ENCODE measurements at regions of chr11 and their contacts with region 1.

Region 1: DNA sequence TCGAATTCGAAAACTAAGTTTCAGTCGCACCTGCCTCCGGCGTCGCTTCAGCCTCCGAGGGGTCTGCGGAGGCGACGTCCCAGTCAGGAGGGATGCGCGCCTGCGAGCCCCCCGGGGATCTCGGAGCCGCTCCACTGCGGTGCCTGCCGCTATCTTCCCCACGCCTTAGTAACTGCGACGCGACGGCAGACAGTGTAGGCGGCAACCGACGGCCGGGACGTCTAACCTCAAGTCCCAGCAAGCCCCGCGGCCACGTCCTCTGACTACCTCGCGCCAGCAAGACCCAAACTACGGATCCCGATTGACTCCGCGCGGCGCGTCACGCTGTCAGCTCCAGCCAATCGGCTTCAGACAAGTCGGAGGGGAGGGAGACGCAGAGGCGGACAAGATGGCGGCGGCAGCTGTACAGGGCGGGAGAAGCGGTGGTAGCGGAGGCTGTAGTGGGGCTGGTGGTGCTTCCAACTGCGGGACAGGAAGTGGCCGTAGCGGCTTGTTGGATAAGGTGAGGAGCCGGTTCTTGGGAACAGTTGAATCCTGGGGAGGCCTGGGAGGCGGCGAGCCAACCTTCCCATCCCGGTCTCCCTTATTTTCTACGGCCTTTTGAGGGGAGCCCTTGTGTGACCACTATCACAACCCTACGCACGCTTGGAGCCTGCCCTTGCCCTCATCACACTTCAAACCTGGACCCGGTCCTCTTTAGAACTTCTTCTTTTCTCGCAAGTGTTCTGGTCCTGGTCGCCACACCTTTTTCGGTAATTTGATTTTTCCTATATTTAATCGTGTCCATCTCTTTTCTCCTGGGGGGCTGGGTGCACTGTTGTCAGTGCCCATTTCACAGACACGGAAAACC is at the starts of genes SPCS2 and XRRA1:
- DNase-seq: peak; percentile 87 to 98 (median 97)
- ATAC-seq: peak; percentile 99
- H3K4me3 ChIP-seq: peak within 1 kb of the TSS; percentile 99
- H3K4me3 Mint-ChIP-seq: peak within 1 kb of the TSS; percentile 95 to 99 (median 96)
- H3K27ac ChIP-seq: peak within 1 kb of the TSS; percentile 78
- H3K27ac Mint-ChIP-seq: peak within 1 kb of the TSS; percentile 85 to 99 (median 96)
- H3K4me1 ChIP-seq: peaks cover 16 to 21% of the 10 kb centered on the region in 2 donors
- H3K4me1 Mint-ChIP-seq: peaks cover 30 to 86% (median 55%) of the 10 kb centered on the region in 7 donors
- H3K27me3 ChIP-seq: no peaks in the 10 kb centered on the region
- H3K27me3 Mint-ChIP-seq: no peaks in the 10 kb centered on the region
- total RNA-seq, gene SPCS2: 53.9 to 211 (median 87.5) TPM
- total RNA-seq, gene XRRA1: 11.3 to 20.8 (median 20.3) TPM

Region 2: DNA sequence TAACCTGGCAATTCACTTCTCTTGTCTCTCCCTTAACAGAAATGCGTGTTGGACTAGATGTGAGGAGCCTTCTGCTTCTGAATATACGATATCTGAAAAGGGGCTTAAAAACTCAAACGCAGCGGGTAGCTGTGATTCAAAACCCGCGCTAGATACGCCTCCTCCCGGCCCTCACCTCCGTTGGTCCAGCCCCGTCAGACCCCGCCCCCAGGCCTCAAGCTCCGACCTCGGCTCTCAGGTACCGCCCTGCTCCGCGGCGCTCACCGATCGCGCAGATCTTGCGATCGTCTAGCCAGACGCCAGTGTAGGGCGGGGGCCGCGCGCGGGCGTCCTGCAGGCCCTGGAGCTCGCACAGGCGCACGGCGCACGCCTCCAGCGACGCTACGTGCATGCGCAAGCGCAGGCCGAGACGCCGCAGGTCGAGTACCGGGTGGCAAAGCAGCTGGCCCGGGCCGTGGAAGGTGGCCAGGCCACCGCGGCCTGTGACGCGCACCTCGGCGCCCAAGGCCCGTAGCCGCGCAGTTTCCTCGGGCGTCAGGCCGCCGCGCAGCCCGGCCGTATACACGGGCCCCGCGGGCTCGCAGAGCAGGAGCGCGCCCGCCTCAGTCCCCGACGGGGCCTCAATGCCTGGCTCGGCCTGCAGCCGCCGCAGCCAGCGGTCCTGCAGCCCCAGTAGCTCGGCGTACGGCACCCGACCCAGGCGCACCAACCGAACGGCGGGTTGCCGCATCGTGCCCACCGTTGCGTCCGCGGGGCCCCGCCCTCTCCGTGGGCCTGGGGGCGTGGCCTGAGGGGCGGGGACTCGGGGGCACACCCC is 455.9 kb before region 1 on chr11 and contains the start of gene LIPT2:
- CTCF ChIA-PET with region 1: no interaction called
- POLR2A ChIA-PET with region 1: no interaction called
- intact Hi-C with region 1: loop called in 1 of 2 experiments (anchors 1 kb)
- DNase-seq: peak; percentile 92 to 98 (median 96)
- ATAC-seq: peak; percentile 97
- H3K4me3 ChIP-seq: peak within 1 kb of the TSS; percentile 90
- H3K4me3 Mint-ChIP-seq: peak within 1 kb of the TSS; percentile 74 to 92 (median 86)
- H3K27ac ChIP-seq: peak within 1 kb of the TSS; percentile 95
- H3K27ac Mint-ChIP-seq: peak within 1 kb of the TSS; percentile 73 to 96 (median 89)
- H3K4me1 ChIP-seq: peaks cover 8 to 10% of the 10 kb centered on the region in 2 donors
- H3K4me1 Mint-ChIP-seq: peaks cover 14 to 43% (median 28%) of the 10 kb centered on the region in 7 donors
- H3K27me3 ChIP-seq: no peaks in the 10 kb centered on the region
- H3K27me3 Mint-ChIP-seq: no peaks in the 10 kb centered on the region
- total RNA-seq, gene LIPT2: 1.9 to 18.2 (median 9.3) TPM

Region 3: DNA sequence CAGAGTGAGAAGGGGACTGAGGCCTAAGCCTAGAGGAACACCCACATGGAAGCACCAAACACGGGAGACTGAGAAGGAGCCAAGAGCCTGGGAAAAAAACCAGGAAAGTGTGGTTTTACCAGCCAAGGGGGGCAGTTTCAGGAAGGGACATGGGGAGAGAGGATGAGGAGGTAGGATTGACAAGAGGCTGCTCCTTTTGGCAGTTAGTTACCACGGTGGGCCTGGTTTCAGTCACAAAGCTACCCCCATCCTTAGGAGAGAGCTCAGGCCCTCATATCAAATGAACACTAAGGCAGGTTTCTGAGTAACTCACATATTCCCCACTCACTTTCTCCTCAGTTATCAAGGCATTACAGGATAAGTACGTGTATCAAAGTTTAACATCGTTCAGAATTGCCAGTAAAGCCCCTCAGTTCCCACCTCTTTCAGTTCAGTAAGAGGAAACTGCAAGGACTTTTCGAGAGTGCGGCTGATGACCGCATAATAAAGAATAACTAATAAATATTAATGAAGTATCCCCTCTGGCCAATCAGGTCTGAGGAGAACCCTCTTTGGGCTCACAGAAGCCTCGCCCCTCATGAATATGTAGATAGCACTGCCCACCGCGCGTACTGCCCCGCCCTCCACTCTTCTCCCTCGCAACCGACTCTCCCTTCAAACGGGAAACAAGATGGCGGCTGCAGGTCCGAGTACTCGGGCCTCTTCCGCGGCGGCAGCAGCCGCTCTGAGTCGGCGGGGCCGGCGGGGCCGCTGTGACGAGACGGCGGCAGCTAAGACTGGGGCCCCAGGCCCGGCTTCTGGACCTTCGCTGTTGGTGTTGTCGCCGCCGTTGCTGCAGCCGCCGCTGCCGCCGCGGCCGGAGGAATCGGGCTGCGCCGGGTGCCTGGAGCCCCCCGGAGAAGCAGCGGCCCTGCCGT is 200.7 kb before region 1 on chr11 and contains the start of gene RNF169:
- CTCF ChIA-PET with region 1: no interaction called
- POLR2A ChIA-PET with region 1: no interaction called
- intact Hi-C with region 1: loop called (anchors 1 kb)
- DNase-seq: peak; percentile 59 to 88 (median 84)
- ATAC-seq: peak; percentile 100
- H3K4me3 ChIP-seq: peak within 1 kb of the TSS; percentile 73
- H3K4me3 Mint-ChIP-seq: peak within 1 kb of the TSS; percentile 81 to 99 (median 94)
- H3K27ac ChIP-seq: peak within 1 kb of the TSS; percentile 79
- H3K27ac Mint-ChIP-seq: peak within 1 kb of the TSS; percentile 84 to 97 (median 91)
- H3K4me1 ChIP-seq: peaks cover 16 to 29% of the 10 kb centered on the region in 2 donors
- H3K4me1 Mint-ChIP-seq: peaks cover 25 to 48% (median 42%) of the 10 kb centered on the region in 7 donors
- H3K27me3 ChIP-seq: no peaks in the 10 kb centered on the region
- H3K27me3 Mint-ChIP-seq: no peaks in the 10 kb centered on the region
- total RNA-seq, gene RNF169: 17.9 to 25.5 (median 22.2) TPM

Region 4: DNA sequence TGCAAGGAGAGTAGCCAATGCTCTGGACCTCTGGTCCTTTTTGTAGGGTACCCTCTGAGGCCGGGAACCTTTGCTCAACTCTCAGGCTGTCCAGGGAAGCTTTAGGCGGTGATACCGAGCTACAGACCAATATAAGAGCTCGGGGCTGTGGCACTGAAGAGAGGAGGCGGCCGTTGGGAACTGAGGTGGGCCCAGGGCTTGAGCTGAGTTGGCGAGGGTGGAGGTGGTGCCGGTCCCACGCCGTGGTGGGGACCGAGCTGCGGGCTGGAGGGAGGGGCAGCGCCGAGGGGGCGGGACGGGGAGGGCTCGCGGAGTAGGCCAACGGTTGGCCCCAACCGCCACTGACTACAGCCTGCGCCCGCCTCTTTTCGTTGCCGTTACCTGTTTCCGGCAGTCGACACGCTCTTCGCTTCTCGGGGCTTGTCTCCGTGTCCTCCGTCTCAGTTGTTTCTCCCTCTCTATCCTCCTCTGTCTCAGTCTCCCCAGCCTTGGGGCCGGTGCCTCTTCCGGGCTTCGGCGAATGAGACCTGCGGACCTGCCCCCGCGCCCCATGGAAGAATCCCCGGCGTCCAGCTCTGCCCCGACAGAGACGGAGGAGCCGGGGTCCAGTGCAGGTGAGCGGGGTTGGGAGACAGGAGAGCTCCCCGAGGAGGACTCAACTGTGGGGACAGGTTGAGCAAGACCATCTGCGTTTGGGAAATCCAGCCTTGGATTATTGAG is 39.6 kb after region 1 on chr11 and contains the start of gene NEU3:
- CTCF ChIA-PET with region 1: no interaction called
- POLR2A ChIA-PET with region 1: interaction called, 9 read pairs
- intact Hi-C with region 1: loop called (anchors 1 kb)
- DNase-seq: peak; percentile 64 to 82 (median 78)
- ATAC-seq: peak; percentile 97
- H3K4me3 ChIP-seq: peak within 1 kb of the TSS; percentile 96
- H3K4me3 Mint-ChIP-seq: peak within 1 kb of the TSS; percentile 88 to 97 (median 93)
- H3K27ac ChIP-seq: peak within 1 kb of the TSS; percentile 81
- H3K27ac Mint-ChIP-seq: peak within 1 kb of the TSS; percentile 75 to 94 (median 89)
- H3K4me1 ChIP-seq: peaks cover 8 to 16% of the 10 kb centered on the region in 2 donors
- H3K4me1 Mint-ChIP-seq: peaks cover 16 to 37% (median 31%) of the 10 kb centered on the region in 7 donors
- H3K27me3 ChIP-seq: no peaks in the 10 kb centered on the region
- H3K27me3 Mint-ChIP-seq: no peaks in the 10 kb centered on the region
- total RNA-seq, gene NEU3: 12.6 to 18.9 (median 16.1) TPM

Region 5: GRCh38 chr11:75399344-75400145 is 450.4 kb after region 1 on chr11 and contains the start of gene RPS3:
- CTCF ChIA-PET with region 1: no interaction called
- POLR2A ChIA-PET with region 1: no interaction called
- intact Hi-C with region 1: loop called (anchors 1 to 2 kb)
- DNase-seq: peak; percentile 81 to 91 (median 88)
- ATAC-seq: peak; percentile 96
- H3K4me3 ChIP-seq: peak within 1 kb of the TSS; percentile 80
- H3K4me3 Mint-ChIP-seq: peak within 1 kb of the TSS; percentile 87 to 99 (median 94)
- H3K27ac ChIP-seq: peak within 1 kb of the TSS; percentile 86
- H3K27ac Mint-ChIP-seq: peak within 1 kb of the TSS; percentile 94 to 99 (median 96)
- H3K4me1 ChIP-seq: peaks cover 16 to 17% of the 10 kb centered on the region in 2 donors
- H3K4me1 Mint-ChIP-seq: peaks cover 20 to 54% (median 48%) of the 10 kb centered on the region in 7 donors
- H3K27me3 ChIP-seq: no peaks in the 10 kb centered on the region
- H3K27me3 Mint-ChIP-seq: peaks cover 0 to 11% (median 0%) of the 10 kb centered on the region in 5 donors
- total RNA-seq, gene RPS3: 3,135 to 5,501 (median 5,089) TPM

Measured in naive thymus-derived CD4-positive, alpha-beta T cell (primary cell).